Activated T-helper 1 cell treated with anti-CD3 and anti-CD28 coated beads, Interleukin-12 subunit alpha, Interleukin-12 subunit beta, Interleukin-2, Interleukin-4 antibody, amounts not matched to agents 30 ng/mL and 10 ng/mL and 1 ng/mL, durations not matched to agents 14 hours and 24 hours and 36 hours (primary cell): ENCODE measurements at regions of chr3 and their contacts with region 1.

Region 1: DNA sequence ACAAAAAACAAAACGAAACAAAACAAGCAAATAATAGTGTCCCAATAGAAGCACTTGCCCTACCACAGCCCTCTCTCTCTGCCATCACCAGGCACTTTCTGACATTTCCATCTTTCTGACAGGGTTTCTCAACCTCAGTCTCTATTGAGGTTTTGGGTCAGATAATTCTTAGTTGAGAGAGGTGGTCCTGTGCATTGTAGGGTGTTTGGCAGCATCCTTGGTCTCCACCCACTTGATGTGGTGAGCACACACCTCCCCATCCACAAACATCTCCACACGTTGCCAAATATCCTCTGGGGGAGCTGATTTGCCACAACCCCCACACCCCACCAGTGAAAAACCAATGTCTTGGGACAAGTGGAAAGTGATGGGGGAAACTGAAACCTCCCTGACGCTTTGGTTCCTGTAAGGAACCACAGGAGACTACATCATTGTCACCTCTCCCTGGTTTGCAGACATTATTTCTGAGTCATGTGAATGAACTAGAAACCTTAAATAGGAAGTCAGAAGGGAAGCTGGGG is 733.7 kb upstream of the CFAP20DC start:
- DNase-seq: peak; percentile 31
- H3K4me3 Mint-ChIP-seq: peak overlapping the region; percentile 40
- H3K27ac Mint-ChIP-seq: peak overlapping the region; percentile 91
- H3K4me1 Mint-ChIP-seq: peaks cover 41% of the 10 kb centered on the region
- H3K27me3 Mint-ChIP-seq: no peaks in the 10 kb centered on the region

Region 2: DNA sequence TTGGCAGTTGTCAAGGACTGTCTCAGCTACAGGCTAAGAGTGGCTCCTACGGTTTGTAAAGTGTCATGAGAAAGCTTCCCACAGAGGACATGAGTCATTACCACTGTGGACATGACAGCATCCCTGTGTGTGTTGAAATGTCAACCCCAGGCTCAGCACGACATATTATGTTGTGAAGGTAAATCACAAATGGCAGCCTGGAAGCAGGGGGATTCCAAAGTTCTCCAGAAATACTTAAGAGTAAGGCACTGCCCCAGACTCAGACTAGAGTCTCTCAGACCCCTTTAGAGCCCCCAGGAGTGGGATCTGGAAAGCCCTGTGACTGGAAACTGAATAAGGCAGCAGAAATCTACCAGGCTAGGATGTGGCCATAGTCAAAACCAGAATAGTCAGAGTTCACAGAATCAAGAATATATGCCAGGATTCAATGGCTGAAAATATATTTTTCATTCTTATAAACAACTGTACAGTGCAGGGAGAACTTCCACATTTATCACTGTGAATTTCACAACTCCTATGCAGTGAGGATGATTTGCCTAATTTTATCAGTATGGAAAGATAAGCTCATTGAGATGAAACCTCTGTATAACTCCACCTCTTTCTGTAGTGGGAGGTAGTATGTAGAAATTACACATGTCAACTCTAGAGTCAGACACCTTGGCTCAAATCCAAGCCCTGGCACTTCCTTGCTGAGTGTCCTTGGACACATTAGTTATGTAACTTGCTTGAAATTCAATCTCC is 496.6 kb before region 1 on chr3:
- intact Hi-C with region 1: loop called (anchors 5 kb)
- DNase-seq: peak; percentile 29
- H3K4me3 Mint-ChIP-seq: peak overlapping the region; percentile 1
- H3K27ac Mint-ChIP-seq: peak overlapping the region; percentile 91
- H3K4me1 Mint-ChIP-seq: peaks cover 37% of the 10 kb centered on the region
- H3K27me3 Mint-ChIP-seq: no peaks in the 10 kb centered on the region

Region 3: GRCh38 chr3:59480486-59480995 is 303.0 kb before region 1 on chr3:
- intact Hi-C with region 1: loop called (anchors 1 kb)
- DNase-seq: no peak
- H3K4me3 Mint-ChIP-seq: peak overlapping the region; percentile 52
- H3K27ac Mint-ChIP-seq: peak overlapping the region; percentile 72
- H3K4me1 Mint-ChIP-seq: peaks cover 41% of the 10 kb centered on the region
- H3K27me3 Mint-ChIP-seq: no peaks in the 10 kb centered on the region

Region 4: DNA sequence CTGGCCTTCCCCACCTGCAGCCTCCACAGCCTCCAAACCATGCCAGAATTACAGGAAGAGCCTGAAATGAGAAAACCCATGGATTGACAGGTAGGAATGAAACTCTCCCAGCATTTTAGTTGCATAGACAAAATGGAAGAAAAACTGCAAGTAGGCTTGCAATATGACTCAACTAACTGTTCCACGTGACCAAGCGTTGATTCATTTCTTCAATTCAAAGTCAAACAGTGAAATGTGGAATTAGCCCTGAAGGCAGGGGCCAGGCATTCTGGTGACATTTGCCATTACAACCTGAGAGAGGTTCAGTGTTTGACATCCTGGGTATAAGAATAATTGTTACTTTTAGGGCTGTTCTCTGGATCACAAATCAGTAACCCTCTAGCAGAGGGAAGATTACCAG is 57.2 kb before region 1 on chr3:
- intact Hi-C with region 1: loop called (anchors 2 kb)
- DNase-seq: peak; percentile 9
- H3K4me3 Mint-ChIP-seq: no peak overlapping the region
- H3K27ac Mint-ChIP-seq: no peak overlapping the region
- H3K4me1 Mint-ChIP-seq: peaks cover 26% of the 10 kb centered on the region
- H3K27me3 Mint-ChIP-seq: peaks cover 5% of the 10 kb centered on the region

Region 5: GRCh38 chr3:59771768-59772181 is 11.8 kb before region 1 on chr3:
- intact Hi-C with region 1: loop called (anchors 1 kb)
- DNase-seq: no peak
- H3K4me3 Mint-ChIP-seq: no peak overlapping the region
- H3K27ac Mint-ChIP-seq: peak overlapping the region; percentile 32
- H3K4me1 Mint-ChIP-seq: peaks cover 50% of the 10 kb centered on the region
- H3K27me3 Mint-ChIP-seq: peaks cover 7% of the 10 kb centered on the region

Region 6: DNA sequence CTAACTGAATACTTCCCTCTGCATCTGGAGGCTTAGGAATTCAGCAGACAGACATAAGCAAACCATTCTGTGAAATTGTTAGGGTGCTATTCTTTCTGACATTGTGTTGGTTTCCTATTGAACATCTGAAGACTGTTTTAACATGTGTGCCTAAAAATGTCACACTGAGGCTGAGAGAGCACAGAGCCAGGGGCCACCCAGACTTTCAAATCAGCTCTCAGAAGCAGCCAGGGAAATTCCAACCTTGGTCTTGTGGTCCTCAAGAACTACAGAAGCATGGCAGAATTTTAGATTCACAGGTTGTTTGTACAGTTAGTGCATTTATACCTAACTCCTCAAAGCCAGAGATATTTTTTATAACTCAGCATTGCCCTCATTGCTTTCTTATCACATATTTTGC is 195.5 kb after region 1 on chr3:
- intact Hi-C with region 1: loop called (anchors 1 kb)
- DNase-seq: peak; percentile 38
- H3K4me3 Mint-ChIP-seq: peak overlapping the region; percentile 64
- H3K27ac Mint-ChIP-seq: peak overlapping the region; percentile 93
- H3K4me1 Mint-ChIP-seq: peaks cover 45% of the 10 kb centered on the region
- H3K27me3 Mint-ChIP-seq: no peaks in the 10 kb centered on the region